CD4-positive, alpha-beta T cell (primary cell): ENCODE measurements at regions of chr11 and their contacts with region 1.

Region 1: GRCh38 chr11:65817835-65818742 is 15.7 kb upstream of the SNX32 start:
- DNase-seq: peak; percentile 84 to 98 (median 94)
- ATAC-seq: peak; percentile 89
- H3K4me3 ChIP-seq: peak overlapping the region; percentile 50
- H3K4me3 Mint-ChIP-seq: peak overlapping the region; percentile 81
- H3K27ac ChIP-seq: peak overlapping the region in 1 of 2 donors; percentile 35
- H3K27ac Mint-ChIP-seq: peak overlapping the region; percentile 67
- H3K4me1 ChIP-seq: peaks cover 16% of the 10 kb centered on the region
- H3K4me1 Mint-ChIP-seq: peaks cover 11% of the 10 kb centered on the region
- H3K27me3 ChIP-seq: no peaks in the 10 kb centered on the region
- H3K27me3 Mint-ChIP-seq: no peaks in the 10 kb centered on the region
- CTCF ChIP-seq: peak; percentile 99

Region 2: DNA sequence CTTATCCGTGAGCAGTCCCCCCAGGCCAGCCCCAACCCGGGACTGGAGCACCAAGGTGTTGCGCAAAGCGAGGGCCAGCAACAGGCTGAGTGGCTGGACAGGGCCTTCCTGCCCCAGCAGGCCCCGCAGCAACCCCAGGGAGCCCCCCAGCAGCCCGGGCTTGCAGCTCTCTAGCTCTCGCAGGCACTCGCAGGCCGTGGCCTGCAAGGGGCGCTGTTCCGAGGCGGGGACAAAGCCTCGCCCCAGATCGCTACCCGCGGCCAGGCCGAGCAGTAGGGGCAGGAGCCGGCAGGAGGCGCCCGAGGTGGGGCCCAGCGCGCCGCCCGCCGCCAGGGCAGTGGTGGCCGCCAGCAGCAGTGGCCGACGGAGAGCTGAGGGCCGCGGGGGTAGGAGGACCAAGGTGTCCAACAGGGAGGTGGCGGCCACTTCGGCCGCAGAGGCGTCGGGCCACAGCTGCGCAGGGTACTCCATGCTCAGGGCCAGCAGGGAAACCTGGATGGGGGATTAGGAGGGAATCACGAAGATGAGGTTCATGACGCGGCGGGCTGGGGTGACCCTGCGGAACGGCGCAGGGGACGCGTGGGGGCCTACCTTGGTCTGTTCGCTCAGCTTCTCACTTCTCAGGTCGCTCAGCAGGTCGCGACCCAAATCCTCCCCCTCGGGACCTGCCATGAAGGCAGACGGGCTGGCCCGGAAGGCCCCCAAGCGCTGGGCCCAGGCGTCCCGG is 38.1 kb before region 1 on chr11:
- CTCF ChIA-PET with region 1: interaction called, 39 read pairs
- POLR2A ChIA-PET with region 1: interaction called, 12 read pairs
- intact Hi-C with region 1: loop called (anchors 1 to 2 kb)
- DNase-seq: peak; percentile 57 to 89 (median 72)
- ATAC-seq: peak; percentile 73
- H3K4me3 ChIP-seq: peak overlapping the region; percentile 92
- H3K4me3 Mint-ChIP-seq: peak overlapping the region; percentile 88
- H3K27ac ChIP-seq: peak overlapping the region in 1 of 2 donors; percentile 17
- H3K27ac Mint-ChIP-seq: peak overlapping the region; percentile 56
- H3K4me1 ChIP-seq: peaks cover 46% of the 10 kb centered on the region
- H3K4me1 Mint-ChIP-seq: peaks cover 17% of the 10 kb centered on the region
- H3K27me3 ChIP-seq: no peaks in the 10 kb centered on the region
- H3K27me3 Mint-ChIP-seq: peaks cover 12% of the 10 kb centered on the region
- CTCF ChIP-seq: peak; percentile 93

Region 3: DNA sequence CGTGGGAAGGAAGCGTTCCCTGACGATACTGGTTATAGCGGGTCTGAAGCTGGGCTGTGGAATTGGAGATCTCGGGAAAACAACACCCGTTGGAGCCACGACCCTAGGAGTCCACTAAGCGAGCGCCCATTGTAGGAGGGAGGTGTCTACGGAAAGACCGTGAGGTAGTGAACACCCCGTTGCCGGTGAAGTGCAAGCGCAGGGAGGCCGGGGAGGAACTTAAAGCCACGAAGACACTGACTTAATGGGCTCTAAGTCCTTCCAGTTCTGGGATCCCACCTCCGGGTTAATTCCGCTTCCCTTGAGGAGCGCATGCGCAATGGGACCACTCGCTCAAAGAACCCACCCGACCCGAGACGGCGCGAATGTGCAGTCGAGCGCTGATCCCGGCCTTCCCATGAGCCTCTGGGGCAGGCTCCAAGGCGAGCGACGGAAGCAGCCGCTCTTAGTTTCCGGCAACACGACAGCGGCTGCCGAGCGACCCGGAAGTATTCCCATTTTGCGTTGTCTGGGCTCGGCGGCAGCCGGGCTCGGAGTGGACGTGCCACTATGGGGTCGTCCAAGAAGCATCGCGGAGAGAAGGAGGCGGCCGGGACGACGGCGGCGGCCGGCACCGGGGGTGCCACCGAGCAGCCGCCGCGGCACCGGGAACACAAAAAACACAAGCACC is 143.3 kb after region 1 on chr11 and contains the start of gene SART1:
- CTCF ChIA-PET with region 1: no interaction called
- POLR2A ChIA-PET with region 1: no interaction called
- intact Hi-C with region 1: no loop called
- DNase-seq: peak; percentile 89 to 99 (median 94)
- ATAC-seq: peak; percentile 90
- H3K4me3 ChIP-seq: peak within 1 kb of the TSS; percentile 92
- H3K4me3 Mint-ChIP-seq: peak within 1 kb of the TSS; percentile 99
- H3K27ac ChIP-seq: peak within 1 kb of the TSS; percentile 93 to 95
- H3K27ac Mint-ChIP-seq: peak within 1 kb of the TSS; percentile 96
- H3K4me1 ChIP-seq: peaks cover 54% of the 10 kb centered on the region
- H3K4me1 Mint-ChIP-seq: peaks cover 55% of the 10 kb centered on the region
- H3K27me3 ChIP-seq: no peaks in the 10 kb centered on the region
- H3K27me3 Mint-ChIP-seq: no peaks in the 10 kb centered on the region
- CTCF ChIP-seq: no peak
- total RNA-seq, gene SART1: 78.6 to 80.2 TPM